ENCODE measurements at regions of chrX and their contacts with region 1.

Region 1: GRCh38 chrX:153411255-153411987 is at the start of gene ZFP92:
- DNase-seq: peak; percentile 43
- ATAC-seq: peak; percentile 86
- H3K4me3 Mint-ChIP-seq: peak within 1 kb of the TSS; percentile 75
- H3K27ac Mint-ChIP-seq: no peak within 1 kb of the TSS
- H3K4me1 Mint-ChIP-seq: peaks cover 10% of the 10 kb centered on the region
- H3K27me3 Mint-ChIP-seq: no peaks in the 10 kb centered on the region
- CTCF ChIP-seq: no peak
- total RNA-seq, gene ZFP92: 1.5 and 1.6 TPM in 2 replicates

Region 2: GRCh38 chrX:152528193-152528592 is 883.2 kb before region 1 on chrX:
- CTCF ChIA-PET with region 1: no interaction called
- POLR2A ChIA-PET with region 1: no interaction called
- intact Hi-C with region 1: no loop called
- DNase-seq: no peak
- ATAC-seq: no peak
- H3K4me3 Mint-ChIP-seq: no peak overlapping the region
- H3K27ac Mint-ChIP-seq: no peak overlapping the region
- H3K4me1 Mint-ChIP-seq: no peaks in the 10 kb centered on the region
- H3K27me3 Mint-ChIP-seq: no peaks in the 10 kb centered on the region
- CTCF ChIP-seq: no peak

Region 3: GRCh38 chrX:153333768-153334645 is 77.4 kb before region 1 on chrX and contains the start of gene ZNF275:
- CTCF ChIA-PET with region 1: no interaction called
- POLR2A ChIA-PET with region 1: interaction called, 3 read pairs
- intact Hi-C with region 1: loop called (anchors 5 kb)
- DNase-seq: peak; percentile 80
- ATAC-seq: peak; percentile 94
- H3K4me3 Mint-ChIP-seq: peak within 1 kb of the TSS; percentile 85
- H3K27ac Mint-ChIP-seq: peak within 1 kb of the TSS; percentile 76
- H3K4me1 Mint-ChIP-seq: peaks cover 44% of the 10 kb centered on the region
- H3K27me3 Mint-ChIP-seq: no peaks in the 10 kb centered on the region
- CTCF ChIP-seq: no peak
- total RNA-seq, gene ZNF275: 19.5 and 22.4 TPM in 2 replicates